ENCODE measurements at regions of chr12 and their contacts with region 1.

Region 1: DNA sequence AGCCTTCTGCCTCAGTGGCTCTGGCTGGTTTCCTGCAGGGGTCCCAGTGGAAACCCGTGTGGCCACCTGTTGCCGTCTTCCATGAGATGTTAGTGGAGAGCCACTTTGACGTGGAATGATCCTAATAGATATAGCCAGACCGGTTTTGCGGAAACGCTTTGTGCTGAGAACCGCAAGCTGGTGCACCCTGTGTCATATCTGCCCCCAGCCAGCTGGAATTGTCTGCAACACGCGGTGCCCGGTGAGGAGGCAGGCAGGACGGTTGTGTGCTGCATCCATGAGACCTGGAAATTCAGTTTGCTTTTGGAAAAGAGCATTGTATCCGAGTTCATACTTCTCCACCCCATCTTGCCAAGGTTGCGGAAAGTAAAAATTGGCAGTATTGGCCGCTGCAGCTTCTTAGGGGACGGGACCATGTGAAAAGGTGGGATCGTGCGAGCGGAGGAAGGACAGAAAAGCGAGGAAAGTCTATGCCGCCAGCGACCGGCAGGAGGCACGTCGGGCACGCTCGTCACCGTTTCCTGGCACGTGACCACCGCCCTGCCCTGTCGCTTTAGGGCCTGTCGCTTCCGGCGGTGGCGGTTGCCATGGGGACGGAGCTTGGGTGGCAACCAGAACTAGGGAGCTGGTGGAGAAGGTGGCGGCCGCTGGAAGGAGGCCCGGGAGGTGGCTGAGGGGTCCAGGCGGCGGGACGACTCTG is at the start of gene CFAP251:
- DNase-seq: peak; percentile 86
- ATAC-seq: peak; percentile 96
- H3K4me3 Mint-ChIP-seq: peak within 1 kb of the TSS; percentile 80
- H3K27ac Mint-ChIP-seq: peak within 1 kb of the TSS; percentile 51
- H3K4me1 Mint-ChIP-seq: peaks cover 12% of the 10 kb centered on the region
- H3K27me3 Mint-ChIP-seq: no peaks in the 10 kb centered on the region
- CTCF ChIP-seq: no peak
- total RNA-seq, gene CFAP251: 0.91 and 1.2 TPM in 2 replicates

Region 2: DNA sequence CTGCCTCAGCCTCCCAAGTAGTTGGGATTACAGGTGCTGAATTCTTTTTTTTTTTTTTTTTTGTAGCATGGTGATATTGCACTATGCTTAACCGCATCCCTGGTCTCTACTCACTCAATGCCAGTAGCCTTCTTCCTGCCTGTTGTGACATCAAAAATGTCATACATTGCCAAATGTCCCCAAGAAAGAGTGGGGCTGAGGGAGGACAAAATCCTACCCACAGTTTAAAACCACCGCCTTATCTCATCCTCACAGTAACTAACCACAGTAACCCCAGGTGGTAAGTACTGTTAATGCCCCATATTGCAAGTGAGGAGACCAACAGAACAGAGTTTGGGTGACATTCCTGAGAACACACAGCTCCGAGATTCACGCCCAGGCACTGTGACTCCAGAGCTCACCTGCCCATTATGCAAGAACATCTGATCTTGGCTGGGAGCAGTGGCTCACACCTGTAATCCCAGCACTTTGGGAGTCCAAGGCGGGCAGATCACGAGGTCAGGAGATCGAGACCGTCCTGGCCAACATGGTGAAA is 268.2 kb before region 1 on chr12:
- CTCF ChIA-PET with region 1: no interaction called
- POLR2A ChIA-PET with region 1: no interaction called
- intact Hi-C with region 1: no loop called
- DNase-seq: no peak
- ATAC-seq: no peak
- H3K4me3 Mint-ChIP-seq: no peak overlapping the region
- H3K27ac Mint-ChIP-seq: no peak overlapping the region
- H3K4me1 Mint-ChIP-seq: no peaks in the 10 kb centered on the region
- H3K27me3 Mint-ChIP-seq: no peaks in the 10 kb centered on the region
- CTCF ChIP-seq: no peak

Region 3: DNA sequence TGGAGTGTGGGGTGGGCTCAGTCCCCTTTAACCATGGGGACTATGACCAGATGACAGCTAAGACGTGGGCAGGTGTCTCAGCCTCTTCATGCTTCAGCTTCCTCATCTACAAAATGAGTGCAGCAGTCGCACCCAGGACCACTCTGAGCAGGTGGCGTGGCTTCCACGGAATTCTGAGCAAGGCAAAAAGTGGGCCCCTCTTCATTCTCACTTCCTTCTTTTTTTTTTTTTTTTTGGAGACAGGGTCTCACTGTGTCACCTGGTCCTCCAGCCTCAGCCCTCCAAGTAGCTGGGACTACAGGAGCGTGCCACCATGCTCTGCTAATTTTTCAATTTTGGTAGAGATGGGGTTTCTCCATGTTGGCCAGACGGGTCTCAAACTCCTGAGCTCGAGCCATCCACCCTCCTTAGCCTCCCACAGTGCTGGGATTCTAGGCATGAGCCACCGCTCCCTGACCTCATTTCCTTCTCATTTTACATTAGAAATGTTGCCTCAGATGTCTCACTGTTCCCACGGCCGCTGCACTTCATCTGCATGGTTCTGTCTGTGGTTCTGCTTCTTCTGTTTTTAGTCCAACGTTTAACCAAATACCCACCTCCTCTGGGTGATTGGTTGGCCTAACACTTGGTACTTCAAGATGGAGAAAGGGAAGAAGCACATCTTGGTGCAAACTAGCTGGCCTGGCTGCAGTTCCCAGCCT is 62.2 kb after region 1 on chr12:
- CTCF ChIA-PET with region 1: interaction called, 6 read pairs
- POLR2A ChIA-PET with region 1: no interaction called
- intact Hi-C with region 1: loop called (anchors 2 kb)
- DNase-seq: no peak
- ATAC-seq: peak; percentile 78
- H3K4me3 Mint-ChIP-seq: peak overlapping the region; percentile 70
- H3K27ac Mint-ChIP-seq: peak overlapping the region; percentile 90
- H3K4me1 Mint-ChIP-seq: peaks cover 59% of the 10 kb centered on the region
- H3K27me3 Mint-ChIP-seq: no peaks in the 10 kb centered on the region
- CTCF ChIP-seq: no peak

Region 4: DNA sequence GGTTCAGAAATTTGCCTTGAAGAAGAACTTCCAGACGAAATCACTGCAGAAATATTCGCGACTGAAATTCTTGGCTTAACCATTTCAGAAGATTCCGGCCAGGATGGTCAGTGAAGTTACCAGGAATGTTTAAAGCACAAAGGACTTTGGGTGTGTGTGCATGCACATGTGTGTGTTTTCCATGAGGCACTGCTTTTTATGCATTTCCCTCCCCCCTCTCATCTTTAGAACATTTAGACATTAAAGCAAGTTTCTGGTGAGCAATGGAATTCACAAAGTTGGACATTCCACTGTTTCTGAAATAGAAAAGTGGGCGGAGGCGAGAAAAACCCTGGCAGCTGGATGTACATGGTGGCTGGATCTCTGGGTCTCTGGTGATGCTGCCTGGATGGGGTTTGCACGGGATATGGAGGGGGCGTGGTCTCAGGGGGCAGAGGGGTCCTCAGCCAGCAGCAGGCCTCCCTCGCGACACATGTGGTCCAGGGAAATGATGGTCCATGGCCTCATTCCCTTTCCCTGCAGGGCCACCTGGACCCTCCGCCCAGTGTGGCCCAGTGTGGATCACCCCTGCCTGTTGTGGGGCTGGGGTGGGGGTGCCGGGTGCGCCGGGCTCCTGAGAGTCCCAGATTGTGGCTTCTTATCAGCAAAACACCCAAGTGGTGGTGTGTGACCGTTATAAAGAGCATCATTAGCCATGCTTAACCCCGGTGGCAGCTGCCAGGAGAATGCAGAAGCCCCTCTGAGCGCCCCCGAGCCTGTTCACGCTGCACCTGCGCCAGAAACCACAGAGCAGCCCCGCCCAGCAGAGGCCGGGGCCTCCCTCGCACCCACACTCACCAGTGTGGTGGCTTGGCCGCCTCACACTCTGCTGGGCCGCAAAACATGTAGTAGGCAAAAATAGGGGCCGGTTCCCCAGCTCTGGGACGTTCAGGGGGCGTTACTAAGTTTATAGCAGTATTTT is 85.8 kb after region 1 on chr12:
- CTCF ChIA-PET with region 1: interaction called, 11 read pairs
- POLR2A ChIA-PET with region 1: interaction called, 8 read pairs
- intact Hi-C with region 1: loop called (anchors 1 kb)
- DNase-seq: peak; percentile 68
- ATAC-seq: peak; percentile 86
- H3K4me3 Mint-ChIP-seq: peak overlapping the region; percentile 67
- H3K27ac Mint-ChIP-seq: peak overlapping the region; percentile 87
- H3K4me1 Mint-ChIP-seq: peaks cover 76% of the 10 kb centered on the region
- H3K27me3 Mint-ChIP-seq: peaks cover 3% of the 10 kb centered on the region
- CTCF ChIP-seq: no peak

Region 5: DNA sequence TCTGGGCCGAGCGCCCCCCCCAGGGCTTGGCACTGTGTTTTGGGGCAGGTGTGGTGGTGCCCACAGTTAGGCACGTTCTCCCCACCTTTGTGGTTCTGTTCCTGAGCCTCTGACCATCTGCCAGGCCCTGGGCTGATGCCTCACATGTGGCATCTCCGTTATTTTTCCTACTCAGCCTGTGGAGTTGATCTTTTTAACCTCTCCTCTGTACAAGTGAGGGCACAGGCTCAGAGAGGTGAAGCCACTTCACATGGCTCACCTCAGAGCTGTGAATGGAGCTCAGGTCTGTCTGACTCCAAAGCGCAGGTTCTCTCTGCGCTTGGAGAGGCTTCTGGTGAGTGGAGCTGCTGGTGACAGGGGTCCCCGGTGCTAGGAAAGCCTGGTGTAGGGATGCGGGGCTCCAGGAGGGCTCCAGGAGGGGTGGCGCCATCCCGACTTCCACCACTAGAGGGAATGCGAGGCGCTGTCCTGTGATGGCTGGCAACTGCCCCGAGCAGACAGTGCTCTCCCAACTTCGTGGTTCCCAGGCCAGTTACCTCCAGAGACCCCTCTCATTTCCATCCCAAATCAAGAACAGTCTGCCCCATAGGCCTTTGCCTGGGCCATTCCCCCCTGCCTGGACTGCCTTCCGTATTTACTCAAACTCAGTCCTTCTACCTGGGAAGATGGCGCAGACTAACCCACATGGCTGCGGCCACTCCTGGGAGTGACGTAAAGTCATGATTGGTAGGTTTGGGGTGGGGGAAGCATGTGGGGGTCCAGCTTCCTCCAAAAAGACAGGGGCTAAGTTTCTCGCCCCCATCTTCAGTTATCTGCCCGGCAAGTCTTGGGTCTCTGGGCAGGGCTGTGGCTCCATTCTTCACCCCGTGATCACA is 113.5 kb after region 1 on chr12:
- CTCF ChIA-PET with region 1: interaction called, 42 read pairs
- POLR2A ChIA-PET with region 1: interaction called, 6 read pairs
- intact Hi-C with region 1: loop called (anchors 1 kb)
- DNase-seq: peak; percentile 61
- ATAC-seq: peak; percentile 21
- H3K4me3 Mint-ChIP-seq: no peak overlapping the region
- H3K27ac Mint-ChIP-seq: peak overlapping the region; percentile 81
- H3K4me1 Mint-ChIP-seq: peaks cover 63% of the 10 kb centered on the region
- H3K27me3 Mint-ChIP-seq: no peaks in the 10 kb centered on the region
- CTCF ChIP-seq: no peak

Region 6: GRCh38 chr12:122123051-122123760 is 205.1 kb after region 1 on chr12:
- CTCF ChIA-PET with region 1: interaction called, 36 read pairs
- POLR2A ChIA-PET with region 1: no interaction called
- intact Hi-C with region 1: loop called (anchors 1 kb)
- DNase-seq: peak; percentile 50
- ATAC-seq: peak; percentile 62
- H3K4me3 Mint-ChIP-seq: no peak overlapping the region
- H3K27ac Mint-ChIP-seq: peak overlapping the region; percentile 38
- H3K4me1 Mint-ChIP-seq: peaks cover 23% of the 10 kb centered on the region
- H3K27me3 Mint-ChIP-seq: no peaks in the 10 kb centered on the region
- CTCF ChIP-seq: no peak

Measured in activated B cell treated with CpG ODN at 0.5 μM for 24 hours (primary cell).